Dendritic cell treated with granulocyte-macrophage colony-stimulating factor and Interleukin-4, amounts not matched to agents 40 ng/mL and 50 ng/mL, for 4 days (primary cell): ENCODE measurements at regions of chr10 and their contacts with region 1.

Region 1: GRCh38 chr10:13776861-13777311 is 190.1 kb downstream of the PRPF18 start:
- H3K4me3 Mint-ChIP-seq: no peak overlapping the region
- H3K27ac Mint-ChIP-seq: no peak overlapping the region
- H3K4me1 Mint-ChIP-seq: peaks cover 18% of the 10 kb centered on the region
- H3K27me3 Mint-ChIP-seq: peaks cover 19% of the 10 kb centered on the region

Region 2: DNA sequence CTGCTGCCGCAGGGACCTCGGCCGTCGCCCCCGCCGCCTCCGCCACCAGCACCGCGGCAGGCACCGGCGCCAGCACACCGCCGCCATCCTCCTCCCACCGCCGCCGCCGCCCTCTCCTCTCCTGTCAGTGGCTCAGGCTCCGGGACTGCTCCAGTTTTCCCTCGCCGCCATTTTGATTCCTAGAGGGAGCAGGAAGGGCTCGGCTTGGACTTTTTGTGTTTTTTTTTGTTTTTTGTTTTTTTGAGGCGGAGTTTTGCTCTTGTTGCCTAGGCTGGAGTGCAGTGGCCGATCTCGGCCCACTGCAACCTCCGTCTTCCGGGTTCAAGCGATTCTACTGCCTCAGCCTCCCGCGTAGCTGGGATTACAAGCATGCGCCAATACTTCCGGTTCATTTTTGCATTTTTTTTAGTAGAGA is 618.4 kb before region 1 on chr10:
- intact Hi-C with region 1: no loop called
- H3K4me3 Mint-ChIP-seq: peak overlapping the region; percentile 70
- H3K27ac Mint-ChIP-seq: peak overlapping the region; percentile 75
- H3K4me1 Mint-ChIP-seq: peaks cover 15% of the 10 kb centered on the region
- H3K27me3 Mint-ChIP-seq: peaks cover 7% of the 10 kb centered on the region

Region 3: DNA sequence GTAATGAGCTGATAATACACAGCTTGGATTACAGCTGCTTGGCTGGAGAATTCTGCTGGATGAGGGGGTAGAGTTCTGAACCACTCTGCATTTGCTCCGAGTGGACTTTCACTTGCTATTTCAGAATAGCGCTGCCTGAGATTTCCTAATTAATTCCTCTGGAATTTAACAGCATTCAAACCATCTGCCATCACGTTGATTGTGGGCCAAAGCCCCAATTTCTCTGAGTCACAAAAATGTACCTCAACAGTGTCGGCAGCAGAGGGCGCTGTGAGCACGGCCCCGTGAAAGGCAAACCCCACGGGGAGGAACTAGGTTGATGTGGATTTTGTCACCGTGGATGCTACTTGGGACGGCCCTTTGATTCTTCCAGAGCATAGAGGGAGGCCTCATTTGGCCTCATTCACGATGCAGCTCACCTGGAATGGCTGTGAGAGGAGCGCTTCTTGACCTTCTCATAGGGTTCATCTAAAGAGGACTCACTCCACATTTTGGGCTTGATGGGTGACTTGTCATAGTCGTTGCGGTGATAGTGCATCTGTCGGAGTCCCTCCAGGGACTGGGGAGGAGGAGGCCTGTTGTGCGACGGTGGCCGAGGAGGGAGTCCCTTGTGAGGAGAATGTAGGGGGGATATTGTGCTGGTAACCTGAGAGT is 116.9 kb before region 1 on chr10:
- intact Hi-C with region 1: loop called (anchors 1 kb)
- H3K4me3 Mint-ChIP-seq: no peak overlapping the region
- H3K27ac Mint-ChIP-seq: no peak overlapping the region
- H3K4me1 Mint-ChIP-seq: peaks cover 20% of the 10 kb centered on the region
- H3K27me3 Mint-ChIP-seq: peaks cover 2% of the 10 kb centered on the region

Region 4: DNA sequence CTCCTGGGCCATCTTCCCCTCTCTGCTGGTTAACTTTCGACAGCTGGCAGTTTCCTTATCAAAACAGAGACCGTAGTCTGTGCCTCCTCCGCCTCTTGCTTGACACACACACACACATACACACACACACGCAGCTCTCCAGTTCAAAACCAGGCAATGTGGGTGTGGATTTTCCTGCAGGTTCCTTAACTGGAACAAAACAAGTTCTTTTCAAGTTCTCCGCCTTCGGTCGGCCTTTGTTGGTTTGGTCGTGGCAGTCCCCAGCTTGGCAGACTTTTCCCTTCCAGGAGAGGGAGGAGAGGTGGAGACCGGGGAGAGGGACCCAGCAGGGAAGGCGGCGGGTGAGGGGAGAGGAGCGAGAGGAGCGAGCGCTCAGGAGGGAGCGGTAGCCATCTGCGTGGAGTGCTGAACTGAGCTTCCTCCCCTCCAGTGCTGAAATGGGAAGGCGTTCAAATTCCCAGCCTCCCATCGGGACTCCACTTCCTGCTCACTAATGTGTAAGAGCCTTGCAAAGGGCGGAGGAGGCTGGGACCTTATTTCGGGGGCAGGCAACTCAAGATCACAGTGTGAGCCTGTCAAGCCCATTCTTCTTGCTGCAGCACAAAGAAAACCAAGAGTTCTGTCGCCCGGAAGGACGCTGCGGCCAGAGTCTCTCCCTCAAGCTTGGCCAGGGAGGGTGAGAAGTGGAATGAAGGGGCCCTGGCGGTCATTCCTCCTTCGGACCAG is 69.6 kb before region 1 on chr10:
- intact Hi-C with region 1: loop called (anchors 5 kb)
- H3K4me3 Mint-ChIP-seq: peak overlapping the region; percentile 89
- H3K27ac Mint-ChIP-seq: peak overlapping the region; percentile 75
- H3K4me1 Mint-ChIP-seq: peaks cover 87% of the 10 kb centered on the region
- H3K27me3 Mint-ChIP-seq: peaks cover 2% of the 10 kb centered on the region

Region 5: DNA sequence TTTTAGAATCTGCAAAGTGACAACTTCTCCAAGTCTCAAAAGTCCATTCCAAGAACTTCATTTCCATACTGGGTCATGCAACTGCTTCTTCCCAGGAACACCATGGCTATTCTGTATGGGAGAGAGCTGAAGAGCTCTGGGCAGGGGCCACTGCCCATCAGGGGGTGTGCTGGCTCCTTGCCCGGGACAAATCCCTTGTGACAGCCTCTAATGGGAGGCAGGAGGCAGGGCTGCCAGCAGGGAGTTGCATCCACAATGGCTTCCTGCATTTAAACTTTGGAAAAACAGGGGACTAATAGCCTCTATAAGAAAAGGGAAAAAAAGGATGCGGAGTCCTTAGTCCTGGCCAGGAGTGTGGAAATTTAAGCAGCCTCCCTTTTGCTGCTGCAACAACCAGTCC is 572.2 kb after region 1 on chr10:
- intact Hi-C with region 1: no loop called
- H3K4me3 Mint-ChIP-seq: no peak overlapping the region
- H3K27ac Mint-ChIP-seq: no peak overlapping the region
- H3K4me1 Mint-ChIP-seq: no peaks in the 10 kb centered on the region
- H3K27me3 Mint-ChIP-seq: peaks cover 7% of the 10 kb centered on the region